K562 (cell line): ENCODE measurements at regions of chr10 and their contacts with region 1.

Region 1: DNA sequence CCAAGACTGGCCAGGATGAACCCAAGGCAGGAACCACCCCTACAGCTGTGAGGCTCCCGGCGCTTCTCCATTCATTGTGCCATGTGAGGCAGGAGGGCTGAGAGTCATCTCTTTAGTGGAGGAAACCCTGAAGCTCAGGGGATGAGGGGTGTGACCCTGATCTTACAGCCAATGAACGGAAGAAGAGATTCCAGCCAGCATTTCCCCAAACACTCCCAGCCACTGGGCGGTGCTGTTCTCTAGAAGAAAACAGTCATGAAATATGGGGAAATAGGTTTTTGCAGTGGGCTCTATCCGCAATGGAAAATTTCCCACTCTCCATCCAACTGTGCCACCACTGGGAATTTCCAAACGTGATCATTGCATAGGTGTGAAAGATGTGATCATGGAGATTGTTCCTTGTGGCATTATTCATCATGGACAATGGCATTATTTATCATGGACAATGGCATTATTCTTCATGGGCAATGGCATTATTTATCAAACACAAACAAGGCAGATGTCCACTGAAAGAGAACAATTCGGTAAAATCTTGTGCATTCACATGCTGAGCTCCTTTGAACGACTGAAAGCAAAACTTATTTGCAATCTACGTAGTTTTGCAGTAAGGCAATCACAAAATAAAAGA is 14.0 kb upstream of the SLC18A2 start:
- DNase-seq: peak; percentile 54 to 71 (median 59)
- ATAC-seq: peak; percentile 92
- H3K4me3 ChIP-seq: no peak overlapping the region
- H3K27ac ChIP-seq: no peak overlapping the region
- H3K4me1 ChIP-seq: no peaks in the 10 kb centered on the region; a peak in 1 of 5 replicates
- H3K27me3 ChIP-seq: peaks cover 2 to 16% of the 10 kb centered on the region in 2 experiments; a peak in 3 of 5 replicates
- CTCF ChIP-seq: peak; percentile 69 to 85 (median 82)
- EP300 ChIP-seq: no peak
- POLR2A ChIP-seq: no peak
- RAD21 ChIP-seq: peak; percentile 82 to 87

Region 2: DNA sequence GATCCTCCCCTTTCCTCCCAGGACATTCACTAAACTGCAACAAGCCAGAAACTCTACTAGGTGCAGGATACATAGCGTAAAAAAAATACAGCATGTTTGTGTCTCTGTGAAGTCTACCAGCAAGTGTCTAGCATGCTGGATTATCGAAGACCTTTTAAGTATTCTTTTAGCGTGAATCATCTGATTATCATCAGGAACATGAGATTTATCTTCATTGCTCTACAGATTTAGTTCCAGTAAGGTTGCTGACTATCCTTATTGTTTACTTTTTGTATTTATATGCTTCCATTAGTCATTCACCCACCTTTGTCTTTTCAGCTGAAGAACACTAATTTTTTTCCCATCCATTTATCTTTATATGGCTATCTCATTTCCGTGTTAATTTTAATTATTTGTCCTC is 85.5 kb after region 1 on chr10:
- CTCF ChIA-PET with region 1: no interaction called
- POLR2A ChIA-PET with region 1: no interaction called
- in situ Hi-C with region 1: loop called (anchors 5 kb)
- intact Hi-C with region 1: no loop called
- DNase-seq: no peak
- ATAC-seq: no peak
- H3K4me3 ChIP-seq: no peak overlapping the region
- H3K27ac ChIP-seq: no peak overlapping the region
- H3K4me1 ChIP-seq: no peaks in the 10 kb centered on the region
- H3K27me3 ChIP-seq: no peaks in the 10 kb centered on the region
- CTCF ChIP-seq: no peak
- EP300 ChIP-seq: no peak
- POLR2A ChIP-seq: no peak
- RAD21 ChIP-seq: no peak

Region 3: DNA sequence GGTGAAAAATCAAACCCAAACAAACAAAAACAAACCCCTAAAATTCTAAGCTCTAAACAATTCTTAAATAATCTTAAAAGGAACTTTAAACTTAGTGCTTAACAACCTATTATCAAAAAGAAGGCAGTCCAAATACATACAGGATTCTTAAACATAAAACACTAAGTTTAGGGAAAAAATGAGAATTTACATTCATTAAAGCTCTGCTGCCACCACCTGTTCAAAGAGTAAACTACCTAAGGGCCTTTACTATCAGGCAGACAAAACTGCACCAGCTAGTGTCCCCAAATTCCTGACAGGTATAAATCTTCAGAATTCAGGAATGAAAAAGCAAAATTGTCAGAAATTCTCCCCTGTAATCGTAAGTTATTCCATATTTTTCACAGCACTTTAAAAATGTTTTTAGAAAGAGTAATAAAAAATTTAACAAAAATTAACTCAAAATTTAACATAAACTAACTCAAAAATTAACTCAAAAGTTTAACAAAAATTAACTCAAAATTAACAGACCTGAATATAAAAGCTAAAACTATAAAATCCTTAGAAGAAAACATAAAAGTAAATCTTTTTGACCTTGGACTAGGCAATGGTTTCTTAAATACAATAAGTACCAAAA is 93.2 kb after region 1 on chr10:
- CTCF ChIA-PET with region 1: interaction called, 23 read pairs
- POLR2A ChIA-PET with region 1: interaction called, 3 read pairs
- in situ Hi-C with region 1: no loop called
- intact Hi-C with region 1: loop called (anchors 1 kb)
- DNase-seq: peak; percentile 16 to 28 (median 24)
- ATAC-seq: peak; percentile 74; the same call in 2 of the 3 replicates
- H3K4me3 ChIP-seq: no peak overlapping the region
- H3K27ac ChIP-seq: no peak overlapping the region
- H3K4me1 ChIP-seq: no peaks in the 10 kb centered on the region
- H3K27me3 ChIP-seq: no peaks in the 10 kb centered on the region
- CTCF ChIP-seq: peak; percentile 39 to 69 (median 67); a peak in 4 of 6 replicates
- EP300 ChIP-seq: no peak
- POLR2A ChIP-seq: no peak
- RAD21 ChIP-seq: peak; percentile 74 to 80

Region 4: GRCh38 chr10:117442944-117443685 is 216.2 kb after region 1 on chr10:
- CTCF ChIA-PET with region 1: no interaction called
- POLR2A ChIA-PET with region 1: no interaction called
- in situ Hi-C with region 1: loop called (anchors 25 kb)
- intact Hi-C with region 1: no loop called
- DNase-seq: peak; percentile 71 to 75 (median 72)
- ATAC-seq: peak; percentile 93
- H3K4me3 ChIP-seq: no peak overlapping the region
- H3K27ac ChIP-seq: no peak overlapping the region
- H3K4me1 ChIP-seq: peaks cover 12 to 14% of the 10 kb centered on the region in 2 experiments; a peak in 3 of 5 replicates
- H3K27me3 ChIP-seq: no peaks in the 10 kb centered on the region
- CTCF ChIP-seq: peak; percentile 65 to 83 (median 71)
- EP300 ChIP-seq: no peak
- POLR2A ChIP-seq: no peak
- RAD21 ChIP-seq: peak; percentile 25 to 54; a peak in 3 of 4 replicates

Region 5: DNA sequence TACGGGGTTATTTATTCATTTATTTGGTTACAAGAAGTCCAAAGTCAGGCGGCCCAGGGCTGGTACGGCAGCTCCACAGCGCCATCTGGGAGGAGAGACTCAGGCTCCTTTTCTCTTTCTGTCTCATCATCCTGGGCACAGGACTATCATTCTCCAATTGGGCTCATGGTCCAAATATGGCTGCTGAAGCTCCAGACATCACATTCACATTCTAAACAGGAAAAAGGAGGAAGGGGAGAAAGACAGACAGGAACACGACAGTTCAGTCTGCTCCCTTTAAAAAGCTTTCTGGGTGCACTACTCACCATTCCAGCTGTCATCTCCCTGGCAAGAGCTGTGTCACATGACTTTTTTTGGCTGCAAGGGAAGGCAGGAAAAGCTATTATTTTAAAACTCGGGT is 222.7 kb after region 1 on chr10:
- CTCF ChIA-PET with region 1: no interaction called
- POLR2A ChIA-PET with region 1: no interaction called
- in situ Hi-C with region 1: loop called (anchors 25 kb)
- intact Hi-C with region 1: loop called (anchors 1 kb)
- DNase-seq: peak; percentile 28 to 53 (median 36)
- ATAC-seq: peak; percentile 82
- H3K4me3 ChIP-seq: no peak overlapping the region
- H3K27ac ChIP-seq: no peak overlapping the region
- H3K4me1 ChIP-seq: no peaks in the 10 kb centered on the region
- H3K27me3 ChIP-seq: no peaks in the 10 kb centered on the region
- CTCF ChIP-seq: peak; percentile 62 to 72 (median 67)
- EP300 ChIP-seq: no peak
- POLR2A ChIP-seq: no peak
- RAD21 ChIP-seq: peak in 1 of 2 experiments; percentile 63; a peak in 2 of 4 replicates